AG04449 (cell line): ENCODE measurements at regions of chr3 and their contacts with region 1.

Region 1: DNA sequence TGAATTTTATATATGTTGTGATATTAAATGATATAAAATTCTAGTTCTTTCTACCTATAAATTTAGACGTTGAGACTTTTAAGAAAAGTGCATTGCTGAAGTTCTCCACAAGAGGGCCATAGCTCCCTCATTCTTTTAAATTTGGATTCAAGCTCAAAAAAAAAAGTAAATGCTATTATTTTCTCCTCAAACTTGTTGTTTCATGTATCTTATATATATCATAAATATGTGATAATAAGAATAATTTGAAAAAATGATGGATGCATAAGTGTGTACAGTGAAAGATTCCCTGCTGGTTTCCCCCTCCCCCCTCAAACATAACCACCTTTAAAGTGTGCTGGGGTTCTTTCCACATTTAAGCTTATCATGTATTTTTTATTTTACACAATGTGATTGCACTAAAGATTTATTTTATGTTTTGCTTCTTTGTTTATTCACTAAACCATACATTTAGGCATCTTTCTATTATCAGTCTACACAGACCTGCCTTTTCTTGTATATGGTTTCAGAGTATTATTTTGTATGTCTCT is 769.4 kb upstream of the GOLIM4 start:
- DNase-seq: no peak
- H3K4me3 ChIP-seq: no peak overlapping the region
- CTCF ChIP-seq: peak; percentile 49

Region 2: DNA sequence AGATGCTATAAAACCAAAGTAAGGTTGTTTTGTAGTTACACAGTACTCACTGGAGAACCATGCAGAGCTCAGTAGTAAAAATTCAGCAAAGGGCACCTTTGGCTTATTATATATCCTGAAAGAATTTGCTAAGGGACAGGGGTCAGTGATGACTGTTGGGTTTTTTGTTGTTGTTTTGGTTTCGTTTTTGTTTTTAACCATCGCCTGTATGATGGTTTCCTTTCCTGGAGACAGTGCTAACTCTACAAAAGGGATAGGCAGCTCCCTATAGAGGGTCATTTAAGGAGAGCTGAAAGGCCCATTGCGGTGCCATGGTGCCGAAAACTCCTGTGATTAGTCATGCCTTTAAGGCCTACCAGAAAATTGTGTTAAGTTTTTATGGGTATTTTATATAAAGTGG is 651.2 kb before region 1 on chr3:
- CTCF ChIA-PET with region 1: interaction called, 10 read pairs
- POLR2A ChIA-PET with region 1: no interaction called
- DNase-seq: no peak
- H3K4me3 ChIP-seq: no peak overlapping the region
- CTCF ChIP-seq: no peak

Region 3: GRCh38 chr3:168876346-168877035 is 11.4 kb after region 1 on chr3:
- CTCF ChIA-PET with region 1: interaction called, 13 read pairs
- POLR2A ChIA-PET with region 1: no interaction called
- DNase-seq: no peak
- H3K4me3 ChIP-seq: no peak overlapping the region
- CTCF ChIP-seq: no peak

Region 4: GRCh38 chr3:169668957-169669681 is 804.0 kb after region 1 on chr3:
- CTCF ChIA-PET with region 1: interaction called, 14 read pairs
- POLR2A ChIA-PET with region 1: no interaction called
- DNase-seq: no peak
- H3K4me3 ChIP-seq: peak overlapping the region; percentile 27
- CTCF ChIP-seq: peak; percentile 82

Region 5: GRCh38 chr3:169744366-169745054 is 879.4 kb after region 1 on chr3:
- CTCF ChIA-PET with region 1: interaction called, 14 read pairs
- POLR2A ChIA-PET with region 1: no interaction called
- DNase-seq: no peak
- H3K4me3 ChIP-seq: no peak overlapping the region
- CTCF ChIP-seq: no peak